Adrenal gland (tissue), 19 donors: ENCODE measurements at regions of chr17 and their contacts with region 1.

Region 1: DNA sequence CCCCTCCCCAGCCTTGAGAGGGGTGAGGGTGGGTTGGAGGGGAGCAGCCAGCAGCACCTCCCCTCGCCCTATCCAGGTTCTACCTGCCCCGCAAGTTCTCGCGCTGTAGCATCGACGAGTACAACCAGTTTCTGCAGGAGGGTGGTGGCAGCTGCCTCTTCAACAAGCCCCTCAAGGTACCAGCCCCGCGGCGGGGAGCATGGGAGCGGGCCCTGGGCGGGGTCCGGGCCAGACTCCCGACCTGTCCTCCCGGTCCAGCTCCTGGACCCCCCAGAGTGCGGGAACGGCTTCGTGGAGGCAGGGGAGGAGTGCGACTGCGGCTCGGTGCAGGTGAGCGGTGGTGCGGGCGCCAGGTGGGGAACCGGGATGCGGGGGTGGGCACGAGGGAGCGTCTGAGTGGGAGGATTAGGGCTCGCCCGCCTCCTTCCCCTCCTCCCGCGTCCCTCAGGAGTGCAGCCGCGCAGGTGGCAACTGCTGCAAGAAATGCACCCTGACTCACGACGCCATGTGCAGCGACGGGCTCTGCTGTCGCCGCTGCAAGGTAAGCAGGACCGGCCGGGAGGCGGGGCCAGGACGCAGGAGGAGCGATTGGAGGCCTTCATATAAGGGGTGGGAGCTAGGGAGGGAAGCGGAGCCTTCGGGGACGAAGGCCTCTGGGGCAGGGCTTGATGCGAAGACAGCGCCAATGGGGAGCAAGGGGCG is 16.5 kb downstream of the ADAM11 start:
- DNase-seq: peak; percentile 97 to 99 (median 98)
- H3K4me3 ChIP-seq: peak overlapping the region in 2 of 4 donors; percentile 20 to 53
- H3K27ac ChIP-seq: peak overlapping the region in 2 of 5 donors; percentile 55 to 69
- H3K4me1 ChIP-seq: peaks cover 11 to 15% of the 10 kb centered on the region in 2 donors
- H3K27me3 ChIP-seq: peaks cover 15% of the 10 kb centered on the region
- CTCF ChIP-seq: peak in 1 of 6 experiments; percentile 45
- POLR2A ChIP-seq: peak in 1 of 2 donors; percentile 29

Region 2: DNA sequence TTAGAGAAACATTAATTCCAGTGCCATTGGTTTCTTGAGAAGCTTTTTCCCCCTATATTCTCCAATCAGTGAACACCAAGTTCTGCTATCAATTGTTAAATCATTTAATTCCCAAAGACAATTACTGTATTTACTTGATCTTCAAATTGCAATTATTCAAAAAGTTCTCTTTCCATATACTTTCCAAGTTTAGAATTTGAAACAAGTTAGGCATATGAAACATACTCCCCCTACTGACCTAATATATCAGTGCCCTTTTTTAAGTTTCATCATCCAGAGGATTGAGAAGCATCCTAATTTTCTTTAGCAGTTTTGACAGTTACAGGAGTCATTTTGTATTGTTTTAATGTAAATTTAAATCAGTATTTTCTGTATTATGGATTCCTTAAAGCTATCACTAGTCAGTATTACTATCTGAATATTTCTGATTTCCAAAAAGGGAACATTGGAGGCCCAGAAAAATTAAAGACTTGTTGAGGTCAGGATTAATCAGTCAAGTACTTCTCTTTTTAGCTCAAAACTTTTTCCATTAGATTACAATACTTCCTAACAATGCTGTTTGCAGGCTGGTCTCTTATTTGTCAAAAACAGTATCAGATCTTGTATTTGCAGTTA is 102.7 kb before region 1 on chr17:
- intact Hi-C with region 1: no loop called
- DNase-seq: no peak
- H3K4me3 ChIP-seq: no peak overlapping the region
- H3K27ac ChIP-seq: no peak overlapping the region
- H3K4me1 ChIP-seq: no peaks in the 10 kb centered on the region
- H3K27me3 ChIP-seq: no peaks in the 10 kb centered on the region
- CTCF ChIP-seq: peak; percentile 30 to 57 (median 36)
- POLR2A ChIP-seq: no peak

Region 3: GRCh38 chr17:44864866-44865660 is 89.8 kb after region 1 on chr17:
- intact Hi-C with region 1: loop called (anchors 2 kb)
- DNase-seq: peak; percentile 62 to 83 (median 74)
- H3K4me3 ChIP-seq: no peak overlapping the region
- H3K27ac ChIP-seq: no peak overlapping the region
- H3K4me1 ChIP-seq: peaks cover 0 to 11% of the 10 kb centered on the region in 2 donors
- H3K27me3 ChIP-seq: no peaks in the 10 kb centered on the region
- CTCF ChIP-seq: peak; percentile 62 to 86 (median 80)
- POLR2A ChIP-seq: no peak

Region 4: DNA sequence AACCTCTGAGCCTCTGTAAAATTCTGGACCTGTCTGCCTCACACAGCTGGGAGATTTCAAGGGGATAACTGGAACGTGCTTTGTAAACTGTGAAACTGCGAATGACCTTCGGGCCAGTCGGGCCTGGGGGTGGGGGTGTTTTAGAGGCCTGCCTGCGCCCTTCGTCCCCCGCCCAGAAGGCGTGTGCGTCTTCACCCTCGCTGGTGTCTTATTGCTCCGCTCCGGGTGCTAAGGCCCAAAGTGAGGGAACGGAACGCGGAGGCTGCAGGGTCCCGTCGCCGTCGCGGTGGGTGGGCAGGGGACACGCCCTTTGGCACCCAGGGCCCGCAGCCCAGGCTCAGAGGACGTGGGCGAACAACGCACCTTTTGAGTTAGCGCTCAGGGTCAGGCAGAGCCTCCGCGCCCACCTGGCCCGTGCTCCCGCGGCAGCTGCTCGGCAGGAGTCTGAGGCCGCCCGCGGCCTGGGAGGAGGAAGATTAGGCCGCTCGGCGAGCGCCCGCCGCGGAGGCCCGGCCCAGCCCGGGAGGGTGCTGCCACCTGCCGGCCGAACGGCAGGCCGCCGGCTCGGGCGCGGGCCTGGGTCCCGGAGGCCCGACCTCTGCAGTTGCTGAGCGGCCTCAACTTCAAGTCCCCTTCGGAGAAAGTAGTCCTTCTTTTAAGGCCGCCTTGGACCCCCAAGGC is 246.5 kb after region 1 on chr17:
- intact Hi-C with region 1: loop called in 1 of 2 experiments (anchors 10 kb)
- DNase-seq: peak; percentile 66 to 73 (median 70)
- H3K4me3 ChIP-seq: peak overlapping the region in 1 of 4 donors; percentile 54
- H3K27ac ChIP-seq: peak overlapping the region in 4 of 5 donors; percentile 57 to 82 (median 75)
- H3K4me1 ChIP-seq: peaks cover 20 to 39% of the 10 kb centered on the region in 2 donors
- H3K27me3 ChIP-seq: no peaks in the 10 kb centered on the region
- CTCF ChIP-seq: peak; percentile 25 to 98 (median 73)
- POLR2A ChIP-seq: peak in 1 of 2 donors; percentile 38

Region 5: DNA sequence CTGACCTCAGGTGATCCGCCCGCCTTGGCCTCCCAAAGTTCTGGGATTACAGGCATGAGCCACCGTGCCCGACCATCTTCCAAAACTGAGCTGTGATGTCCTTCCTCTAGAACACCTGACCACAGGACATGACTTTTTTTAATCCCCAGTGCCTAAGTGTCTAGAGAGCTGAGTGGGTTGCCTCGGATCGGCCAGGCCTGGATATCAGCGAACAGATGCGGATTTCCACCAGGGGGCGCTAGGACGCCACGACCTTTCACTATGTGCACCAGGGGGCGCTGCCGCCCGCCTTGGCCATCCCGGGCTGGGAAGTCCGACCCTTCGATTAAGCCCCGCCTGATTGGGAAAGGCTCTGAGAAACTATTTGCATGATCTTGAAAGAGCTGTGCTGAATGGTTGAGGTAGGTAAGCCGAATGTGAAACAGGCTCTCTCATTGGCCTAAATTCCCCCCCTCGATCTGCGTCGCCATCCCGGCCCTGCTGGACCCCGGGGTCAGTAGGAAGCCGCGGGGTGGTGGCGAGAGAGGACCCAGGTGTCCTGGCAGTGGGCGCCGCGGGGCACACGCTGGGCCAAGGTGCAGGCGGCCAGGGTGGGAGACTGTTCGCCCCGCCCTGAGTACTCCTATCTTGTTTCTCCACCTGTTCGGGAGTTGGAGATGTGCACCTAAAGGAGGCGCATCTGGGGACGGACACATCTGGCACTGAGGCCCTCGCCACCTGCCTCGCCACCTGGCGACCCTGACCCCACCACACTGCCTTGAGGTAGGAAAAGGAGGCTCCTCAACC is 360.1 kb after region 1 on chr17 and contains the start of gene ACBD4:
- intact Hi-C with region 1: loop called in 1 of 2 experiments (anchors 10 kb)
- DNase-seq: peak; percentile 95 to 99 (median 97)
- H3K4me3 ChIP-seq: peak within 1 kb of the TSS in 2 of 4 donors; percentile 73 to 86
- H3K27ac ChIP-seq: peak within 1 kb of the TSS in 4 of 5 donors; percentile 29 to 87 (median 75)
- H3K4me1 ChIP-seq: peaks cover 19 to 33% of the 10 kb centered on the region in 2 donors
- H3K27me3 ChIP-seq: no peaks in the 10 kb centered on the region
- CTCF ChIP-seq: peak; percentile 100
- POLR2A ChIP-seq: peak; percentile 22 to 42
- total RNA-seq, gene ACBD4: 6.6 to 30.6 (median 19.1) TPM